Activated naive CD4-positive, alpha-beta T cell treated with anti-CD3 and anti-CD28 coated beads for 36 hours (primary cell): ENCODE measurements at regions of chr12 and their contacts with region 1.

Region 1: DNA sequence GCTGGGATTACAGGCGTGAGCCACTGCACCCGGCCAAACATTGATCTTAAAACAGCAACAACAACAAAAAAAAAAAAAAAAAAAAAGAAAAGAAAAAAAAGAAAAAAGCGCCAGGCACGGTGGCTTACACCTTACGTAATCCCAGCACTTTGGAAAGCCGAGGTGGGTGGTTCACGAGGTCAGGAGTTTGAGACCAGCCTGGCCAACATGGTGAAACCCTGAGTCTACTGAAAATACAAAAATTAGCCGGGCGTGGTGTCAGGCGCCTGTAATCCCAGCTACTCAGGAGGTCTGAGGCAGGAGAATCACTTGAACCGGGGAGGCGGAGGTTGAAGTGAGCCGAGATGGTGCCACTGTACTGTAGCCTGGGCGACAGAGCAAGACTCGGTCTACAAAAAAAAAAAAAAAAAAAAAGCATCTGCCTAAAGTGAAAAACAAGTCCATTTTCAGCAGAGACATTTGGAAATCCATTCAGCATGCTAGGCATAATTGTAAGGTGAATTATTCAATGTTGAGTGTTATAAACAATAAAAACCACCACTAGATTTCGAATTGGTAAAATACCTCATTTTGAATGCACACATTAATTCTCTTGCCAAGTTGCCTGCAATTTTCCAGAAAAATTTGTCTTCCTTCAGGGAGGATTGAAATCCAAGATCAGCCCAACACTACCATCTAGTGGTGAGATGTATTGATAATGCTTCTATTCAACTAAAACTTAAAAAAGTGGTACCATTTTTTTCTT is 8.0 kb upstream of the CERS5 start:
- DNase-seq: no peak
- H3K4me3 Mint-ChIP-seq: no peak overlapping the region
- H3K27ac Mint-ChIP-seq: no peak overlapping the region
- H3K4me1 Mint-ChIP-seq: no peaks in the 10 kb centered on the region
- H3K27me3 Mint-ChIP-seq: no peaks in the 10 kb centered on the region

Region 2: DNA sequence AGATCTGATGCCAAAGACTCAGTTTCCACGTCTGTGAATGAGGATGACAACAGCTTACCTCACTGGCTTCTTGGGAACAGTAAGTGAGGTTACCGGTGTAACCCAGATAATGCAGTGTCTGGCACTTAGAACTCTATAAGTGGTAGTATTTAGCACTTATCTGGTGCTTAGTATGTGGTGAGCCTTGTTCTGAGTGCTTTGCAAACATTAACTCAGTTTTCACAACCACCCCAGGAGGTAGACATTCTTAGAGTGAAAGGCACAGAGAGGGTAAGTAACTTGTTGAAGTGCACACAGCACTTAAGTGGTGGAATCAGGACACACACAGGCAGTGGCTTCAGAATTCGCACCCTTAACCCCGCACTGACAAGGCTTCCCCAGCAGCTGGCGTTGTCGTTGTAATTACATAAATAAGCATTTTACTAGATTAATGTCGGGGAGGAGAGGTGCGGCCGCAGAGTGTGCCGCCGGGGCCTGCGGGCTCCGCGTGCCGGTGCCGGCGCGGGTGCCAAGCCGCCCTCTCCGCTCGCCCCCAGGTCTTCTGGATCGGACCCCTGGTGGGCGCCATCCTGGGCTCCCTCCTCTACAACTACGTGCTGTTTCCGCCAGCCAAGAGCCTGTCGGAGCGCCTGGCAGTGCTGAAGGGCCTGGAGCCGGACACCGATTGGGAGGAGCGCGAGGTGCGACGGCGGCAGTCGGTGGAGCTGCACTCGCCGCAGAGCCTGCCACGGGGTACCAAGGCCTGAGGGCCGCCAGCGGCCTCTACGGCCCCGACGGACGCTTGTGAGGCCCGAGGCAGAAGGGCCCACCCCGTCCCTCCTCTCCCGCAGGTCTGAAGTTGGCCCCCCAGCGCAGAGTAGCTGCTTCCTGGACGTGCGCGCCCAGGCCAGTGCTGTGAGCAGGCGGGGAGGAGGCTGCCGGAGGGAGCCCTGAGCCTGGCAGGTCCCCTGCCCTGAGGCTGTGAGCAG is 220.0 kb before region 1 on chr12:
- CTCF ChIA-PET with region 1: no interaction called
- intact Hi-C with region 1: no loop called
- DNase-seq: no peak
- H3K4me3 Mint-ChIP-seq: no peak overlapping the region
- H3K27ac Mint-ChIP-seq: no peak overlapping the region
- H3K4me1 Mint-ChIP-seq: no peaks in the 10 kb centered on the region
- H3K27me3 Mint-ChIP-seq: peaks cover 60% of the 10 kb centered on the region

Region 3: GRCh38 chr12:50032639-50033581 is 142.2 kb before region 1 on chr12:
- CTCF ChIA-PET with region 1: no interaction called
- intact Hi-C with region 1: no loop called
- DNase-seq: no peak
- H3K4me3 Mint-ChIP-seq: no peak overlapping the region
- H3K27ac Mint-ChIP-seq: no peak overlapping the region
- H3K4me1 Mint-ChIP-seq: no peaks in the 10 kb centered on the region
- H3K27me3 Mint-ChIP-seq: peaks cover 18% of the 10 kb centered on the region

Region 4: GRCh38 chr12:50084775-50085614 is 90.1 kb before region 1 on chr12 and contains the start of gene SMARCD1:
- CTCF ChIA-PET with region 1: interaction called, 13 read pairs
- intact Hi-C with region 1: loop called (anchors 1 kb)
- DNase-seq: peak; percentile 88
- H3K4me3 Mint-ChIP-seq: peak within 1 kb of the TSS; percentile 89
- H3K27ac Mint-ChIP-seq: peak within 1 kb of the TSS; percentile 93
- H3K4me1 Mint-ChIP-seq: peaks cover 42% of the 10 kb centered on the region
- H3K27me3 Mint-ChIP-seq: no peaks in the 10 kb centered on the region
- total RNA-seq, gene SMARCD1: 57.7 to 60.2 TPM

Region 5: DNA sequence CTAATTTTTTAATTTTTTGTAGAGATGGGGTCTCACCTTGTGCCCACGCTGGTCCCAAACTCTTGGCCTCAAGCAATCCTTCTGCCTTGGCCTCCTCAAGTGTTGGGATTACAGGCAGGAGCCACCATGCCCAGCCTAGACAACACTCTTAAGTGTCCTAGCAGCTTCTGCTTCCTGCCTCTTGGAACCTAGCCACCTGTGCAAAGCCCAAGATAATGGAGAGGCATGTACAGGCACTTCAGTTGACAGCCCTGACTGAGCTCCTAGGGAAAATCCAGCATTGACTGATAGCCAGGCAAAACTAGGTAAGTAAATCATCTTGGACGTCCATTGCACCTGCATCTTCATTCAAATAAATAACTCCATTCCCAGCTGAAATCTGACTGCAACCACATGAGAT is 47.6 kb before region 1 on chr12:
- CTCF ChIA-PET with region 1: interaction called, 47 read pairs
- intact Hi-C with region 1: loop called (anchors 1 kb)
- DNase-seq: no peak
- H3K4me3 Mint-ChIP-seq: no peak overlapping the region
- H3K27ac Mint-ChIP-seq: peak overlapping the region; percentile 26
- H3K4me1 Mint-ChIP-seq: peaks cover 18% of the 10 kb centered on the region
- H3K27me3 Mint-ChIP-seq: no peaks in the 10 kb centered on the region

Region 6: DNA sequence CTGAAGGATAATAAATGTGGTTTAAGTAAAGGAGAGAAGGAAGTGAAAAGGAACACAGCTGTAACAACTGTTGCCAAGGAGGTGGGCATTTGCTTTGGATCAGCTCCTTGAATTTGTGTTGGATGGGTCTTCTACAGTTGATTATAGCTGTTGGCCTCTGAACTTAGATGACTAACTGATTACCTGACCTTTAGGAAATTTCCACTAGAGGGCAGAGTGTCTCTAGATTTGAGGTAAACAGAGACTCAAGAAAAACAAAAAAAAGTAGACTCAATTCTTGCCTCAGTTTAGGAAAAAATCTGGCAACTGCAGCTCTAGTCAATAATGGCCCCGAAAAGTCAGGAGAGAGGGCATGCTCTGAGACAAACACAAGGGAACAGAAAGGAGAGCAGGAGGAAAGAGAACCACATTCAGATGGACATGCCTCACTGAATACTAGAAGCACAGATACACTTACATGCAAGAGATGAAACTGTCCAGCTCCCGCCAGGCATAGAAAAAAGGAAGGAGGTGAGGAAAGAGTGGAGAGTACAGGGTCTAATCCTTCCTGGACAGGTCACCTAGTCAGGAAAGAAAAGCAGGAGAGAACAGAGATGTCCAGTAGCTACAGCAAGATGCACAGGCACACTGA is 42.5 kb before region 1 on chr12:
- CTCF ChIA-PET with region 1: interaction called, 47 read pairs
- intact Hi-C with region 1: loop called (anchors 1 kb)
- DNase-seq: no peak
- H3K4me3 Mint-ChIP-seq: no peak overlapping the region
- H3K27ac Mint-ChIP-seq: peak overlapping the region; percentile 81
- H3K4me1 Mint-ChIP-seq: peaks cover 8% of the 10 kb centered on the region
- H3K27me3 Mint-ChIP-seq: no peaks in the 10 kb centered on the region

Region 7: GRCh38 chr12:50187084-50187900 is 12.1 kb after region 1 on chr12:
- CTCF ChIA-PET with region 1: interaction called, 13 read pairs
- intact Hi-C with region 1: no loop called
- DNase-seq: peak; percentile 45
- H3K4me3 Mint-ChIP-seq: no peak overlapping the region
- H3K27ac Mint-ChIP-seq: peak overlapping the region; percentile 61
- H3K4me1 Mint-ChIP-seq: peaks cover 29% of the 10 kb centered on the region
- H3K27me3 Mint-ChIP-seq: no peaks in the 10 kb centered on the region

Region 8: GRCh38 chr12:50257686-50258551 is 82.8 kb after region 1 on chr12:
- CTCF ChIA-PET with region 1: no interaction called
- intact Hi-C with region 1: no loop called
- DNase-seq: no peak
- H3K4me3 Mint-ChIP-seq: no peak overlapping the region
- H3K27ac Mint-ChIP-seq: no peak overlapping the region
- H3K4me1 Mint-ChIP-seq: peaks cover 10% of the 10 kb centered on the region
- H3K27me3 Mint-ChIP-seq: no peaks in the 10 kb centered on the region

Region 9: DNA sequence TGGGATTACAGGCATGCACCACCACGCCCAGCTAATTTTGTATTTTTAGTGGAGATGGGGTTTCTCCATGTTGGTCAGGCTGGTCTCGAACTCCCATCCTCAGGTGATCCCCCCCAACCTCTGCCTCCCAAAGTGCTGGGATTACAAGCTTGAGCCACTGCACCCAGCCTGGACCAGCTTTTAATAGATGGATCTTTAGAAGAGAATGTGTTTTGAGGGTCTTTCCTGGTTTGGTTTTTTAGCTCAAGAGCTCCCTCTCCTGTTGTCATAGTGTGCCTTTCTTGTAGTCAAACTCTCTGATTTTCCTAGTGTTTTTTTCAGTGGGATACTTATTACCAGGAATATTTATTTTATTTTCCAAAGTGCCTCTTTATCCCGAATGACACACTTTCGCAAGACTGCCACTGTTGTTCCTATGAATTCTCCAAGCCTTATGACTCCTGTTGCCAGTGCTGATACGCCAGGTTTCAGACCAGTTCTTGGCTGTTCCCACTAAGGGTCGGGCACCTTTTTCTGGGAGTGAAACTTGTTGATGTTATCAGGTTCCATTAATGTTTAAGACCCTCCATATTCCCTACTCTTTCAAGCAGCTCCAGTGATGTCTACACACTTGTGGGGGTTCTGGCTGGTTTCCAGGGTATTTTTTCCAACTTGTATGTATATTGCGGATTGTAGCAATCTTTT is 139.6 kb after region 1 on chr12:
- CTCF ChIA-PET with region 1: interaction called, 4 read pairs
- intact Hi-C with region 1: loop called (anchors 2 kb)
- DNase-seq: no peak
- H3K4me3 Mint-ChIP-seq: no peak overlapping the region
- H3K27ac Mint-ChIP-seq: no peak overlapping the region
- H3K4me1 Mint-ChIP-seq: no peaks in the 10 kb centered on the region
- H3K27me3 Mint-ChIP-seq: no peaks in the 10 kb centered on the region

Region 10: DNA sequence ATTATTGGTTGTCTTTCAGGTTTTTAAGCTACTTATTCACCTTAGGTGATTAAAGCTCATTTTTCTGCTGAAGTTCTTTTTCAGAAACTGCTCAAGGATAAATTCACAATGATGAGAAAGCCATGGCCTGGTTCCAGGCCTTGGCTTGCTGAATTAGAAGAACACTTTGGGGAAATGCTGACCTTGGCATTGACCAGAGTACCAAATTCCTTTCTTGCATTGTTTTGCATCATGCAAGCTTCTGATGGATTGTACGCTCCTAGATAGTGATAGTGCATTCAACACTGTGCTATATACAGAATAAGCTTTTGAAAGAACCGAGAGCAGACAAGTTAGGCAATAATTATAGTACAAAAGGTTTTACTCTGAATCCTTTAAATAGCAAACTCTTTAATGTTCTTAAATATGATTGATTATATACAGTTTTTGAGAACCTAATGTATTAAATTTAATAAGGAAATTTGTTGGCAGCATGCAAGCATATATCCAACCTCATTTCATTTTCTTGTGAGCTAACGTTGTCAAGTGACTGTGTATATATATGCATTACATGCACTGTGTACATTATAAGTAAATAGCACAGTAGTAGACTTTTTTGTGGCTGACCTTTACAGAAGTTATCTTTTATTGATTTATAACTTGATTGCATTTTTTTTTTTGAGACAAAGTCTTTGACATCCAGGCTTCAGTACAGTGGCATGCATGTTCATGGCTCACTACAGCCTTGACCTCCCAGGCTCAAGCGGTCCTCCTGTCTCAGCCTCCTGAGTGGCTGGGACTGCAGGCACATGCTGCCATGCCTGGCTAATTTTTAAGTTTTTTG is 428.9 kb after region 1 on chr12:
- CTCF ChIA-PET with region 1: no interaction called
- intact Hi-C with region 1: no loop called
- DNase-seq: no peak
- H3K4me3 Mint-ChIP-seq: no peak overlapping the region
- H3K27ac Mint-ChIP-seq: no peak overlapping the region
- H3K4me1 Mint-ChIP-seq: peaks cover 37% of the 10 kb centered on the region
- H3K27me3 Mint-ChIP-seq: no peaks in the 10 kb centered on the region